Activated CD4-positive, alpha-beta memory T cell treated with anti-CD3 and anti-CD28 coated beads for 36 hours (primary cell): ENCODE measurements at regions of chr2 and their contacts with region 1.

Region 1: GRCh38 chr2:68721482-68722101 is 13.0 kb upstream of the ARHGAP25 start:
- DNase-seq: peak; percentile 62
- H3K4me3 Mint-ChIP-seq: peak overlapping the region; percentile 61
- H3K27ac Mint-ChIP-seq: peak overlapping the region; percentile 85
- H3K4me1 Mint-ChIP-seq: peaks cover 90% of the 10 kb centered on the region
- H3K27me3 Mint-ChIP-seq: no peaks in the 10 kb centered on the region

Region 2: GRCh38 chr2:67895227-67895941 is 826.2 kb before region 1 on chr2:
- CTCF ChIA-PET with region 1: no interaction called
- POLR2A ChIA-PET with region 1: no interaction called
- intact Hi-C with region 1: no loop called
- DNase-seq: no peak
- H3K4me3 Mint-ChIP-seq: no peak overlapping the region
- H3K27ac Mint-ChIP-seq: no peak overlapping the region
- H3K4me1 Mint-ChIP-seq: no peaks in the 10 kb centered on the region
- H3K27me3 Mint-ChIP-seq: no peaks in the 10 kb centered on the region

Region 3: DNA sequence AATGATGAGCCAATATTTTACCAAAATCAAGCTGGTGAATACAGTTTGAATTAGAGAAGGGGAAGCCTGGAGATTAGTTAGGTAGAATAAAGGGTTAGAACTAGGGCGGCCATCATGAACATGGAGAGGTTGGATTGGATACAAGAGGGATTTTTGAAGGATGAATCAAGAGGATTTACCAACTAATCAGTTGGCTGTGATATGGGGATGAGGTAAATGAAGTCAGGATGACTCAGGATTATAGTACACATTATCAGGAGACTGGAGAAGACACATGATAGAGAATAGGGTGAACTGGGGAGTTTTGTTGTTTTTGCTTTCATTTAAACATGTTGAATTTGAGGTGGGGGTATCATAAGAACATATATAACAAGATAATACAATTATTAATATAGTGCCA is 152.0 kb before region 1 on chr2:
- CTCF ChIA-PET with region 1: no interaction called
- POLR2A ChIA-PET with region 1: no interaction called
- intact Hi-C with region 1: no loop called
- DNase-seq: no peak
- H3K4me3 Mint-ChIP-seq: no peak overlapping the region
- H3K27ac Mint-ChIP-seq: no peak overlapping the region
- H3K4me1 Mint-ChIP-seq: no peaks in the 10 kb centered on the region
- H3K27me3 Mint-ChIP-seq: no peaks in the 10 kb centered on the region

Region 4: GRCh38 chr2:68700560-68700959 is 21.0 kb before region 1 on chr2:
- CTCF ChIA-PET with region 1: no interaction called
- POLR2A ChIA-PET with region 1: no interaction called
- intact Hi-C with region 1: no loop called
- DNase-seq: no peak
- H3K4me3 Mint-ChIP-seq: no peak overlapping the region
- H3K27ac Mint-ChIP-seq: no peak overlapping the region
- H3K4me1 Mint-ChIP-seq: peaks cover 8% of the 10 kb centered on the region
- H3K27me3 Mint-ChIP-seq: peaks cover 2% of the 10 kb centered on the region

Region 5: GRCh38 chr2:68734688-68735525 is 13.3 kb after region 1 on chr2 and contains the start of gene ARHGAP25:
- CTCF ChIA-PET with region 1: interaction called, 27 read pairs
- POLR2A ChIA-PET with region 1: interaction called, 31 read pairs
- intact Hi-C with region 1: loop called (anchors 1 kb)
- DNase-seq: peak; percentile 87
- H3K4me3 Mint-ChIP-seq: no peak within 1 kb of the TSS
- H3K27ac Mint-ChIP-seq: no peak within 1 kb of the TSS
- H3K4me1 Mint-ChIP-seq: peaks cover 36% of the 10 kb centered on the region
- H3K27me3 Mint-ChIP-seq: no peaks in the 10 kb centered on the region
- total RNA-seq, gene ARHGAP25: 79.8 to 87.7 TPM